Lower leg skin (tissue), 4 donors: ENCODE measurements at regions of chr7 and their contacts with region 1.

Region 1: DNA sequence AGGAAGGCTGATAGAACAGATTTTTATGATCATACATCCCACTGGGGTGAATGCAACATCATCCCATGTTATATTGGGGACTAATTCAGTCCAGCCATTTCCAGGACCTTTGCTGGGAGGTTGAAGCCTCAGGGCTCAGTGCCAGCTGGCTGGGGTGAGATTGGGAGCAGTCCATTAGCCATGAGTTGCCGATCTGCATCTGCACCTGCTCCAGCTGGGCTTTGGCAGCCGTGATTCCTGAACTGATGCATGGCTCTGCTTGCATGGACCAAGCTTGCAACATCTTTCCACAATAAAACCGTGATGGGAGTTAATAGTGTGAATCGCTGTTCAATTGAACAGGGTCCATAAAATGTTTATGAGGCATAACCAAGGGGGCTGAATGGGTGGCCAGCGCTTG is 346.9 kb downstream of the TYW1 start:
- DNase-seq: peak in 1 of 2 donors; percentile 20
- H3K4me3 ChIP-seq: no peak overlapping the region
- CTCF ChIP-seq: no peak
- POLR2A ChIP-seq: no peak

Region 2: GRCh38 chr7:67302113-67303039 is 41.2 kb before region 1 on chr7:
- intact Hi-C with region 1: no loop called
- DNase-seq: peak; percentile 99 to 100
- H3K4me3 ChIP-seq: peak overlapping the region; percentile 65
- CTCF ChIP-seq: no peak
- POLR2A ChIP-seq: no peak

Region 3: DNA sequence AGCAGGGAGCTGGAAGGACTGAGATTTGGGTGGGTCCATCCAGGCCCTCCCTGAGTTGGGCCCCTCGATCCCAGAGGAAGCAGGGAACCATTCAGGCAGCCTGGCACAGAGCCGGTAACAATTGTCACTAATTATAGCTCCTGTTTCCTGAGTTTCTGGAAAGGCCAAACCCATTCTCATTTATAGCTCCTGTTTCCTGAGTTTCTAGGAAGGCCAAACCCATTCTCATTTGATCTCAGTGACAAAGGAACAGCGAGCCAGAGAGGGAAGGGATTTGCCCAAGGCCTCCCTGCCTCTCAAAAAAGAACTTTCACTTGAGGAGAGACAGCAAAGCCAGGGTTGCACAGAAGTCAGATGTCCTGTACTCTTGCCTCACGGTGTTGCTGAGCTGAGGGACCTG is 175.0 kb after region 1 on chr7:
- intact Hi-C with region 1: no loop called
- DNase-seq: no peak
- H3K4me3 ChIP-seq: no peak overlapping the region
- CTCF ChIP-seq: no peak
- POLR2A ChIP-seq: no peak

Region 4: GRCh38 chr7:69018200-69018599 is 1674.6 kb after region 1 on chr7:
- intact Hi-C with region 1: loop called (anchors 5 kb)
- DNase-seq: no peak
- H3K4me3 ChIP-seq: no peak overlapping the region
- CTCF ChIP-seq: no peak
- POLR2A ChIP-seq: no peak